Calu3 (cell line): ENCODE measurements at regions of chr15 and their contacts with region 1.

Region 1: DNA sequence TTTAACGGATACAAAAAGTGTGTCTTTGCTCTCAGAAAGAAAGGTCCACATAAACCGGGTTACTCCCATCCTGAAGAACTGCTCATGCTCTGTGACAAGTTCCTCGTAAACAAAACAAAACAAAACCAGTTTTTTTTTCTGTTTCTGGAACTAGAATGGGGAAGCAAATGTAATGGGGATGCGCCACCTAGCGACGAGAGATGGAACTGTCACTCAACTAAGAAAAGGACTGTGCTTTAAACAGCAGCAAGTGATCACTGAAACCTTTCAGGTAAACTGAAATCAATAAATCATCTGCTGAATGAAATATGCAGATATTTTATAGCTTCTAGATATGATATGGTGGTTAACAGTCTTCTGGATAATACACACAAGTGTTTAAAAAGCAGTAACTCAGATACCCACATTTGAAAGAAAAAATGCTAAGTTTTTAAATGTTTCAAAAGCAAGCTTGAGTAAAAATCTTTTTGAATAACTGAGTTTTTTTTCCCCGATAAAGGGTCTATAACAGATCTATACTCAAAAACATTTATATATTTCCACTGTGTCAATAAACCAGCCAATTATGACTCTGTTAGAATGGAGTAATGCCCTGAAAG is 10.9 kb downstream of the TM2D3 start:
- DNase-seq: peak; percentile 74
- H3K4me3 Mint-ChIP-seq: no peak overlapping the region
- H3K27ac Mint-ChIP-seq: no peak overlapping the region
- H3K4me1 Mint-ChIP-seq: peaks cover 7% of the 10 kb centered on the region
- H3K27me3 Mint-ChIP-seq: no peaks in the 10 kb centered on the region
- CTCF ChIP-seq: peak; percentile 90

Region 2: DNA sequence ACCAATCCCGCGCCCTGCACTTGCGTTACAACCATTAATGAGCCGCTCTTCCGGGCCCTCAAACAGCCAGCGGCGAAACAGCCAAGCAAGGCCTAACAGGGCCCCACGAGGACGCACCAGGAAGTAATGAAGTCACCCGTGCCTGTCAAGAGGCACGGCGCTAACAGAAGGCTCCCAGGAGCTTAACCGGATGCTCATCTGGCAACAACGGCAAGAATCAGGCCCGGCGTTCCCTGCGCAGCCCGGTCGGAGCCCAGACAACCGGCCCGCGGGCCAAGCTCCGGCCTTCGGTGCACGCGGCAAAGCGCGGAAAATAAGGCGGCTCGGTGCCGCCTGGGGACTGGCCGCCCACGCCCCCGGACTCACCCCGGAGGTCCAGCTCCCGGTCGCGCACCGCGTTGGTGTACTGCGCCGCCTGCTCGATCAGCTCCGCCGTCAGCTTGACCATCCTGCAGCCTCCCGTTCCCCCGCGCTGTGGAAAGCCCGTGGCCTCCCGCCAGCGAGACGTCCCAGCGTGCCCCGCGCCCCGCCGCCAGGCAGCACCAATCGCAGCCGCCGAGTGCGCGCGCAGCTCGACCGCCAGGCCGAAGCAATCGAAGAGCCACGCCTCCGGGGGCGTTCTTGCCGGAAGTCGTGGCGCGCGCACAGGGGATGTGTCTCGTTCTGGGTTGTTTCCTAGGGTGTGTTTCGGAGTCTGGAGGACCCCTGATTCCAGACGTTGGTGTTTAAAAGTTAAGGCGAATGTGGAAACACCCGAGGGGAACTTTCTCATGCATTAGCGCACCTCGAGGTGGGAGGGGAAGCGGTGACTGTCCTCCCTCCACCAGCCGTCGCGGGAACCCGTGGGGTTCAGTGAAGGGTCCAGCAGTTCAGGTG is 346.3 kb before region 1 on chr15 and contains the start of gene SNRPA1:
- CTCF ChIA-PET with region 1: interaction called, 4 read pairs
- intact Hi-C with region 1: loop called (anchors 1 kb)
- DNase-seq: peak; percentile 99
- H3K4me3 Mint-ChIP-seq: peak within 1 kb of the TSS; percentile 98
- H3K27ac Mint-ChIP-seq: peak within 1 kb of the TSS; percentile 89
- H3K4me1 Mint-ChIP-seq: no peaks in the 10 kb centered on the region
- H3K27me3 Mint-ChIP-seq: no peaks in the 10 kb centered on the region
- CTCF ChIP-seq: no peak
- total RNA-seq, gene SNRPA1: 123 and 140 TPM in 2 replicates

Region 3: DNA sequence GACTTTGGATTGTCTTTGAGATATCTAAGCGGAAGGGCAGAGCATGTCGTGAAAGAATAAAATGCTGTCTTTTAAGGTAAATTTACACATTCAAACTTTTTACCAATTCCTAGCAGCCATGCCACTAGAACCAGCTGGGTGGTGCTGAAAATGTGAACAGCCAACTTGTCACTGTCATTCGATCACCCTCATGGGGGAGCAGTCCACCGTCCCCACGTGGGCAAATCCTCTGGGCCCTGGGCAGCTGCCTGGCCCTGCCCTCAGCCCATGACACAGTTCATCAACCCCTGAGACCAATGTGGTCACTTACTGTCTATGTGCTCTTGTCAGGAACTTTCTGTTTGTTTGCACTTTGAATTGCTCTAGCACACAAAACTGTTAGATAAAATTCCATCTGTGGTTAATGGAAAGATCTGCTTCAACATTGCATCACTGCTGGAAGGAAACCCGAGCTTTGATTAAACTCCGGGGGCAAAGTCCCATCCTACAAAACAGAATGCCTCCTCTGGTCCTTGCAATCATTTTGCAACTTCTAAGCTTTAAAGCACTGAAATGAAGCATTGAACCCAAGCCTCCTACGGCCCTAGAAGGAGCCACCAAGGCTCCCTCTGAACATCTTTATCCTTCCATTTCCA is 201.9 kb before region 1 on chr15:
- CTCF ChIA-PET with region 1: no interaction called
- intact Hi-C with region 1: loop called (anchors 1 kb)
- DNase-seq: peak; percentile 44
- H3K4me3 Mint-ChIP-seq: peak overlapping the region; percentile 1
- H3K27ac Mint-ChIP-seq: no peak overlapping the region
- H3K4me1 Mint-ChIP-seq: peaks cover 20% of the 10 kb centered on the region
- H3K27me3 Mint-ChIP-seq: peaks cover 7% of the 10 kb centered on the region
- CTCF ChIP-seq: no peak

Region 4: GRCh38 chr15:101540480-101541239 is 100.6 kb before region 1 on chr15:
- CTCF ChIA-PET with region 1: no interaction called
- intact Hi-C with region 1: loop called (anchors 1 kb)
- DNase-seq: no peak
- H3K4me3 Mint-ChIP-seq: no peak overlapping the region
- H3K27ac Mint-ChIP-seq: no peak overlapping the region
- H3K4me1 Mint-ChIP-seq: no peaks in the 10 kb centered on the region
- H3K27me3 Mint-ChIP-seq: peaks cover 29% of the 10 kb centered on the region
- CTCF ChIP-seq: no peak

Region 5: DNA sequence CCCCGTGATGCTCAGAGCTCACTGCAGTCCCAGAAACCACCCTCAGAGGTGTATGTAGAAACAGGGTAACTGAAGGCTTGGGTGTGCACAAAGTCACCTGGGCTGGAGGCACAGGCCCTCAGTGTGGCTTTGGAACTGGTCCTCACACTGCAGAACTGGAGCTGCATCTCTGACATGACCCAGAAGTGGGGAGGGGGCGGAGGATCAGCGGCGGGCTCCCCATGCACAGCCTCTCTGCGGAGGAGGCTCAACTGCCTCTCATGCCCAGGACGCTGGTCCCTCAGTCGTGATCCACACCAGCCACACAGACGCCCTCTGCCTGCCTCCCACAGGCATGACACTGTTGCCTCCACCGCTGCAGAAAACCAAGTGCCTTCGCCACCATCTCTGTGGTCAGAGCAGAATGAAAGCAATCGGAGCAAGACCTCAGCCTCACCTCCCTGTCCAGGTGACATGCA is 62.8 kb before region 1 on chr15:
- CTCF ChIA-PET with region 1: no interaction called
- intact Hi-C with region 1: loop called (anchors 5 kb)
- DNase-seq: peak; percentile 72
- H3K4me3 Mint-ChIP-seq: peak overlapping the region; percentile 17
- H3K27ac Mint-ChIP-seq: no peak overlapping the region
- H3K4me1 Mint-ChIP-seq: peaks cover 34% of the 10 kb centered on the region
- H3K27me3 Mint-ChIP-seq: peaks cover 36% of the 10 kb centered on the region
- CTCF ChIP-seq: peak; percentile 21

Region 6: DNA sequence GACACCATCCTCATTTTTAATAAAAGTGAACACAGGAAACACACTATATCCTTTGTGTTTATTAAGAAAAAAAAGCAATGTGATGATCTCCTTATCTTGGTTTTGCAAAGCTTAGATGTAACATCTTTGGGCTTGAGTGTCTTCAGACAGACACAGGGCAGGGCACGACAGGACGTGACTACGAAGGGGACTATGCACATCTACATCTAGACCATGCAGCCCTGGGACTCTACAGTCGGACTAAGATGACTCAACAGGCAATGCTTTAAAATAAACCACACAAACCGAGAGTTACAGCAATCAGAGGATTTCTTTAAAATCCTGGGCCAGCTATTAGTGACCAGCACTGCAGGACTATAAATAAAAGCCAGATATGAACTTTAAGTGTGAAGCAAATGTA is 33.8 kb after region 1 on chr15:
- CTCF ChIA-PET with region 1: no interaction called
- intact Hi-C with region 1: no loop called
- DNase-seq: no peak
- H3K4me3 Mint-ChIP-seq: no peak overlapping the region
- H3K27ac Mint-ChIP-seq: no peak overlapping the region
- H3K4me1 Mint-ChIP-seq: no peaks in the 10 kb centered on the region
- H3K27me3 Mint-ChIP-seq: no peaks in the 10 kb centered on the region
- CTCF ChIP-seq: no peak

Region 7: GRCh38 chr15:101712078-101712477 is 70.8 kb after region 1 on chr15:
- CTCF ChIA-PET with region 1: no interaction called
- intact Hi-C with region 1: no loop called
- DNase-seq: no peak
- H3K4me3 Mint-ChIP-seq: no peak overlapping the region
- H3K27ac Mint-ChIP-seq: no peak overlapping the region
- H3K4me1 Mint-ChIP-seq: peaks cover 9% of the 10 kb centered on the region
- H3K27me3 Mint-ChIP-seq: no peaks in the 10 kb centered on the region
- CTCF ChIP-seq: no peak